ENCODE measurements at regions of chr5 and their contacts with region 1.

Region 1: GRCh38 chr5:170297589-170298462 is at the start of gene LCP2:
- DNase-seq: peak in 1 of 5 donors; percentile 37
- ATAC-seq: peak; percentile 25 to 74 (median 55)
- H3K4me3 ChIP-seq: peak within 1 kb of the TSS; percentile 33 to 80 (median 56)
- H3K27ac ChIP-seq: peak within 1 kb of the TSS; percentile 64 to 99 (median 80)
- H3K4me1 ChIP-seq: peaks cover 0 to 73% (median 6%) of the 10 kb centered on the region in 12 donors
- H3K27me3 ChIP-seq: no peaks in the 10 kb centered on the region
- CTCF ChIP-seq: no peak
- POLR2A ChIP-seq: peak in 1 of 2 donors; percentile 20
- total RNA-seq, gene LCP2: 2.8 to 73.7 (median 6.1) TPM

Region 2: GRCh38 chr5:170028124-170028523 is 269.7 kb before region 1 on chr5:
- intact Hi-C with region 1: no loop called
- DNase-seq: no peak
- ATAC-seq: no peak
- H3K4me3 ChIP-seq: no peak overlapping the region
- H3K27ac ChIP-seq: no peak overlapping the region
- H3K4me1 ChIP-seq: no peaks in the 10 kb centered on the region
- H3K27me3 ChIP-seq: peaks cover 0 to 8% (median 0%) of the 10 kb centered on the region in 9 donors
- CTCF ChIP-seq: no peak
- POLR2A ChIP-seq: no peak

Region 3: DNA sequence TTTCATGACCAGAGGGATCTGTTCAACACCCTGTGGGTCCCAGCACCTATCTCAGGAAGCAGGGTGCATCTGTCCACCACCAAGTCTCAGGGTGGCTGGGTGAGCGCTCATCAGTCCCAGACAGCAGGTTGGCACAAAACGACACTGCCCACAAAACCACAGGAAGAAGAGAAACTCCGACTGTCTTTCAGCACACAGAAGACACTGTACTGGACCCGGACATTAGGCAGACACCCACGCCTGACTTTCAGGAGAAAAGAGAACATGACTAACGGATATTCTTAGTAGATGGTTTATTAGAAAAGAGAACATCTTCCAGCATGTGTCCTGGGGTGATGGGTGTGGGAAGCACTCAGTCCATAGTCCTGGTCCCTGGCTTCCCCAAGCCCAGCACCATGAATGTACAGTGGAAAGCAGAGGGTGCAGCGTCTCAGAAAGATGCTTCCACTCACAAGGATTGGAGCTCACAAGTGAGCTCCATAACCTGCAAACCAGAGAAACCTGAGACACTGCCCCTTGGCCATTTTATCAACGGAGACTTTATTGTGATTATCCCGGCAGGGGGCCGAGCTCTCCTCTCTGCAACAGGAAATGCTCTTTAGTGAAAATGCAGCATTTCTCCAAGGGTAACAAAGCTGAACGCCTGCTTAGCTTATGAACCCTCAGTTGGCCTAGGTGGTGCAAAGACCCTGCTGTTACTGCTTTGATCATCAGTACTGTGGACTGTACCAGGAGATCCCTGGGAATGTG is 35.5 kb after region 1 on chr5:
- intact Hi-C with region 1: loop called in 2 of 10 experiments (anchors 5 kb)
- DNase-seq: no peak
- ATAC-seq: peak in 3 of 4 donors; percentile 12 to 19 (median 18)
- H3K4me3 ChIP-seq: peak overlapping the region in 1 of 12 donors; percentile 21
- H3K27ac ChIP-seq: peak overlapping the region in 2 of 12 donors; percentile 18 to 90
- H3K4me1 ChIP-seq: peaks cover 0 to 93% (median 13%) of the 10 kb centered on the region in 12 donors
- H3K27me3 ChIP-seq: no peaks in the 10 kb centered on the region
- CTCF ChIP-seq: no peak
- POLR2A ChIP-seq: no peak

Measured in heart left ventricle (tissue), 16 donors.